Dorsolateral prefrontal cortex (tissue), 120 donors: ENCODE measurements at regions of chr5 and their contacts with region 1.

Region 1: GRCh38 chr5:142063878-142064331 is 44.7 kb upstream of the NDFIP1 start:
- DNase-seq: peak; percentile 95 to 99 (median 97)
- H3K4me3 ChIP-seq: peak overlapping the region in 49 of 59 donors; percentile 1 to 55 (median 30)
- H3K27ac ChIP-seq: peak overlapping the region; percentile 86 to 99 (median 97)
- H3K27me3 ChIP-seq: no peaks in the 10 kb centered on the region
- CTCF ChIP-seq: peak in 11 of 56 donors; percentile 3 to 30 (median 18)

Region 2: DNA sequence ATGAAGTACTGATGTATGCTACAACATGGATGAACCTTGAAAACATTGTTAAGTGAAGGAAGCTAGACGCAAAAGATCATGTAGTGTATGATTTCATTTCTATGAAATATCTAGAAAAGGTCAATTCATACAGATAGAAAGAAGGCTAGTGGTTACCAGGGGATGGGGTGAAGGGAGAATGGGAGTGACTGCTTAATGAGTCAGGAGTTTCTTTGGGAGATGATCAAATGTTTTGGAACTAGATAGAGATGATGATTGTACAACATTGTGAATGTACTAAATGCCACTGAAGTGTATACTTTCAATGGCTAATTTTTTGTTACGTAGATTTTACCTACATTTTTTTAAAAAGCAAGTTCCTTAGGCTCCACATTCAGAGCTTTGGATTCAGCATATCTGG is 155.1 kb before region 1 on chr5:
- intact Hi-C with region 1: no loop called
- DNase-seq: no peak
- H3K4me3 ChIP-seq: no peak overlapping the region
- H3K27ac ChIP-seq: no peak overlapping the region
- H3K27me3 ChIP-seq: no peaks in the 10 kb centered on the region
- CTCF ChIP-seq: no peak

Region 3: GRCh38 chr5:142012792-142013388 is 51.0 kb before region 1 on chr5 and contains the start of gene GNPDA1:
- intact Hi-C with region 1: loop called (anchors 1 to 2 kb)
- DNase-seq: peak; percentile 69 to 92 (median 76)
- H3K4me3 ChIP-seq: peak within 1 kb of the TSS; percentile 70 to 97 (median 86)
- H3K27ac ChIP-seq: peak within 1 kb of the TSS; percentile 83 to 99 (median 96)
- H3K27me3 ChIP-seq: no peaks in the 10 kb centered on the region
- CTCF ChIP-seq: peak in 21 of 56 donors; percentile 8 to 55 (median 29)
- total RNA-seq, gene GNPDA1: 20.5 to 56.1 (median 37.9) TPM

Region 4: DNA sequence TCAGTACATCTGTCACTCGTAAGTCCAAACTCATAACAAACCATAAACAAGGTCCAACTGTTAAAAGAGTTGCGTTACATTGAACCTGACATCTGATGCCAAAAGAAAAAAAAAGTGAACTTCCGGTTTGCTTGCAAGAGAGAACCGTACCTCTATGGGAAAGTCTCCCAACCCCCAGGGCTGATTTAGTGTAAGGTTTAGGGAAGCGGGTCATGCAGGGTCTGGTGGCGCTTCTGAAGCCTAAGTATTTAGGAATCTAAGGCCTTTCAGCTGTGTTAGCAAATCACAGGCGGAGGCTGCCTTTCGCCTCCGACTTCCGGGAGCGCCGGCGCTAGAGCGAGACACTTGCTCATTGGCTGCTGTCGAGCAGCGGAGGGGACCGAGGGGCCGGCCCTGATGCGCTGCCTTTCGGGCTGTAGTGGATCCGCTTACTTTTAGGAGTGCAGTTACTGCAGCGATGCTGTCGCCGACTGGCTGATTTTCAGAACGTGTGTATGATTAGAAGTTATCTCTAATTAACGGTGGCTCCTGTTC is 39.1 kb before region 1 on chr5:
- intact Hi-C with region 1: loop called in 1 of 2 experiments (anchors 1 kb)
- DNase-seq: peak; percentile 85 to 94 (median 90)
- H3K4me3 ChIP-seq: peak overlapping the region; percentile 43 to 80 (median 61)
- H3K27ac ChIP-seq: peak overlapping the region; percentile 70 to 97 (median 90)
- H3K27me3 ChIP-seq: no peaks in the 10 kb centered on the region
- CTCF ChIP-seq: peak in 42 of 56 donors; percentile 7 to 66 (median 37)

Region 5: GRCh38 chr5:142108432-142109330 is 44.8 kb after region 1 on chr5 and contains the start of gene NDFIP1:
- intact Hi-C with region 1: loop called (anchors 2 to 5 kb)
- DNase-seq: peak; percentile 63 to 90 (median 75)
- H3K4me3 ChIP-seq: peak within 1 kb of the TSS; percentile 54 to 97 (median 85)
- H3K27ac ChIP-seq: peak within 1 kb of the TSS; percentile 87 to 100 (median 98)
- H3K27me3 ChIP-seq: no peaks in the 10 kb centered on the region
- CTCF ChIP-seq: peak in 39 of 56 donors; percentile 5 to 63 (median 29)
- total RNA-seq, gene NDFIP1: 89.7 to 309 (median 217) TPM